A673 (cell line): ENCODE measurements at regions of chr6 and their contacts with region 1.

Region 1: DNA sequence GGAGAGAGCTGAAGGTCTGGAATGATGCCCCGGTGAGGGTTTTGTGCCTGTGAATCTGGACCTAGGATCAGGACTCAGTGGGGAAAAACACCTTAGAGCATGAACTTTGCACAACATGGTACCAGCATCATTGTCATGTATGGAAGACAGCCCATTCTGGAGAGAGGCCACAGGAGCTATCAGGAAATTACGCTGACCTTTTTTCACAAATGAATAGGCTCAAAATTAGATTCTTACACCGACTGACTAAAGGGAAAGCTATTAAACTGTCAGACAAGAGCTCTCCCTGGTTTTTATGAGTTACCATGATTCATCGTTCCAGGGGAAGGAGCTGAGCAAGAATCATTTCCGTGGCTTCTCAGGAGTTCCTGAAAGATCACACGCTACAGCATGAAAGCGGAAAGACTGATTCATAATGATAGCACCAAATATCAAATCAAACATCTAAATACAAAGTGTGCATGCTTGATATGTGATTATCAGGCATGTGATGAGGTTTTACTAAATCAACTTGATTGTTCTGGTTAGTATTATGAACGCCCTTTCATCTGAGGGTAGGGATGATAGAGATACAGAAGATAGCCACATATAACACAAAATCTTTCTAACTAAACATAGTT is 224.9 kb upstream of the SMLR1 start:
- DNase-seq: peak; percentile 96
- H3K4me3 ChIP-seq: no peak overlapping the region
- H3K27ac ChIP-seq: peak overlapping the region; percentile 85
- H3K4me1 ChIP-seq: peaks cover 45% of the 10 kb centered on the region
- H3K27me3 ChIP-seq: no peaks in the 10 kb centered on the region
- CTCF ChIP-seq: no peak

Region 2: DNA sequence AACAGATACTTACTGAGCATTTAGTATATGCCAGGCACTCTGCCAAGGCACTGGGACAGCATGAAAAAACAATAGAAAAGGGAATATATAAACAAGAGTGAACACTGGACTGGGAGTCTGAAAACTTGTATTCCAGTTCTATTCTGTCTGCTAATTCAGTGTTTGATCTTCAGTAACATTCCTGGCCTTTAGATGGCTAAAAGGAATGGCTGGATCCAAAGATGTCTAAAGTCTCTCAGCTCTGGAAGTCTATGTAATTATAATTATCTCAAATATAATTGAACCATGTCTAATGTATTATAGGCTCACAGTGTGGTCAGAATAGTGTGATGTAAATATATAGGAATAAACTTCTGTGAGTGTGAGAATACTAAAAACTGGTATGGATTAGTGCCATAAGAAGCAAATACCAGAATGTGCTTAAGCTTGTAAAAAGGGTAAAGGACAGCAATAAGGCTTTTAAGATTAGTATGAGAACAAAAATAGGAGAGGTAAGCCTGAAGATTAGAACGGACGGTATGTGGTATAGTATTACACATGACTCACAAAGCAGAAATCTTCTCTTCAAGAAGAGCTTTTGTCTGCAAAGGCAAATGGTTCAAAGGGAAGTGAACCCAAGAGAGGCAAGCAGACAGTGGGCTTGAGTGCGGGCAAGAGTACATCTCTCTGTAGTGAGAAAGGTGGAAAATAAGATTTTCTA is 167.9 kb before region 1 on chr6:
- CTCF ChIA-PET with region 1: no interaction called
- POLR2A ChIA-PET with region 1: no interaction called
- intact Hi-C with region 1: loop called (anchors 5 kb)
- DNase-seq: peak; percentile 39
- H3K4me3 ChIP-seq: no peak overlapping the region
- H3K27ac ChIP-seq: no peak overlapping the region
- H3K4me1 ChIP-seq: peaks cover 26% of the 10 kb centered on the region
- H3K27me3 ChIP-seq: no peaks in the 10 kb centered on the region
- CTCF ChIP-seq: no peak

Region 3: DNA sequence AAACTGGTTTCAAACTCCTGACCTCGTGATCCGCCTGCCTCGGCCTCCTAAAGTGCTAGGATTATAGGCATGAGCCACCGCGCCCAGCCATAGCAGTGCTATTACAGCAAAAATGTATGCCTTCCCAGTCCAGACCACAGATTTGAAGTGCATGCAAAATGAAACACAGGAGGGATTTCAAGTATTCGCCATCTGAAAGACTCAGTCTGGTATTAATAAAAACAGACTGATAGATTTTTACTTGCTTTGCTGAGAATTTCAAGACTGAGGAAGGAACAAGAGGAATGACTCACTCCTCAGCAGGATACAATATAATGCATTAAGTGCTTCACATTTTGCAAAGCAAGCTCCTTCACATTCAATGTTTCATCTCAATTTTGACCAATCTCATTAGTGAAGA is 101.6 kb before region 1 on chr6:
- CTCF ChIA-PET with region 1: no interaction called
- POLR2A ChIA-PET with region 1: no interaction called
- intact Hi-C with region 1: loop called (anchors 5 kb)
- DNase-seq: peak; percentile 92
- H3K4me3 ChIP-seq: no peak overlapping the region
- H3K27ac ChIP-seq: peak overlapping the region; percentile 34
- H3K4me1 ChIP-seq: peaks cover 36% of the 10 kb centered on the region
- H3K27me3 ChIP-seq: no peaks in the 10 kb centered on the region
- CTCF ChIP-seq: no peak

Region 4: DNA sequence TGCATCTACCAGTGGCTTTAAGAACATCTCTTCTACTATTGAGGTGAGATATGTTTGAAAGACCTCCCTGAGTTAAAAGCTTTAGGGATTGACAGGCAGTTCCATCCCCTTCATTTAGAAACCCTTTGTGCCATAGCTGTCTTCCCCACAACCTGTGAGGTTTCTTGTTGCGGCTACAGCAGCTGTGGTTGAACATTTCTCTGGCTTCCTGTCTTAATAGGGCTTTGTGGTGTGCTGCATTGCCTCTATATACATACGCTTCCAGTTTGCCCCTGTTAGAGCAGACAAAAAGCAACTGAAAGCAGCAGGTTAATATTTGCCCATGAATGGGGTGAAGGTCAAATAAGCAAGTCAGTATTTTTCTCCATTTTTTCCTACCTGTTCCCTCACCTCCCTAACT is 26.3 kb before region 1 on chr6:
- CTCF ChIA-PET with region 1: no interaction called
- POLR2A ChIA-PET with region 1: interaction called, 10 read pairs
- intact Hi-C with region 1: no loop called
- DNase-seq: no peak
- H3K4me3 ChIP-seq: no peak overlapping the region
- H3K27ac ChIP-seq: no peak overlapping the region
- H3K4me1 ChIP-seq: peaks cover 30% of the 10 kb centered on the region
- H3K27me3 ChIP-seq: no peaks in the 10 kb centered on the region
- CTCF ChIP-seq: no peak